ENCODE measurements at regions of chrX and their contacts with region 1.

Region 1: DNA sequence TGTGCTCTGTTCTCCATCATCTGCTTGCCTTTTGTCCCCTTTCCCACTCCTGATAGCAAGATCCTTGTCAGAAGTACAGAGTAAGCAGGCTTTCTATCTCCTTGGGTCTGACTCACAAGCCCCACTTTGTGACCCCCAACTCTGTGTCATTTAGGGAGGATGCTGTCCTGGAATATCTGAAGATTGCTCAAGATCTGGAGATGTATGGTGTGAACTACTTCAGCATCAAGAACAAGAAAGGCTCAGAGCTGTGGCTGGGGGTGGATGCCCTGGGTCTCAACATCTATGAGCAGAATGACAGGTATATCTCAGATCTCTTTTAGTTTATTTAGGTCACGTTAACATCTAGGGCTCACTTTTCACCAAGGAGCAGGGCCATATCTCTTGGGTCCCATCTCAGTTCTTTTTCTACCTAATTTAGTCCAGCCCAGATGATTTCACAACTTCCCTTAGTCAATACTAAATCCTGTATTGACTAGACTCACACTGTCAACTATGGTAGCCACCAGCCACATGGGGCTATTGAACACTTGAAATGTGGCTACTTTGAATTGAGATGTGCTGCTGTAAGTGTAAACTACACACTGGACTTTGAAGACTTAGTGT is 64.3 kb downstream of the MSN start:
- DNase-seq: peak; percentile 46
- H3K4me3 Mint-ChIP-seq: no peak overlapping the region
- H3K27ac Mint-ChIP-seq: peak overlapping the region; percentile 88
- H3K4me1 Mint-ChIP-seq: peaks cover 67% of the 10 kb centered on the region
- H3K27me3 Mint-ChIP-seq: no peaks in the 10 kb centered on the region

Region 2: GRCh38 chrX:65516756-65517155 is 215.0 kb before region 1 on chrX:
- CTCF ChIA-PET with region 1: no interaction called
- POLR2A ChIA-PET with region 1: no interaction called
- intact Hi-C with region 1: no loop called
- DNase-seq: no peak
- H3K4me3 Mint-ChIP-seq: no peak overlapping the region
- H3K27ac Mint-ChIP-seq: no peak overlapping the region
- H3K4me1 Mint-ChIP-seq: no peaks in the 10 kb centered on the region
- H3K27me3 Mint-ChIP-seq: no peaks in the 10 kb centered on the region

Region 3: GRCh38 chrX:65602221-65602560 is 129.6 kb before region 1 on chrX:
- CTCF ChIA-PET with region 1: no interaction called
- POLR2A ChIA-PET with region 1: no interaction called
- intact Hi-C with region 1: no loop called
- DNase-seq: no peak
- H3K4me3 Mint-ChIP-seq: no peak overlapping the region
- H3K27ac Mint-ChIP-seq: peak overlapping the region; percentile 91
- H3K4me1 Mint-ChIP-seq: peaks cover 77% of the 10 kb centered on the region
- H3K27me3 Mint-ChIP-seq: no peaks in the 10 kb centered on the region

Region 4: GRCh38 chrX:65744965-65745364 is 13.2 kb after region 1 on chrX:
- CTCF ChIA-PET with region 1: no interaction called
- POLR2A ChIA-PET with region 1: no interaction called
- intact Hi-C with region 1: loop called (anchors 1 kb)
- DNase-seq: no peak
- H3K4me3 Mint-ChIP-seq: no peak overlapping the region
- H3K27ac Mint-ChIP-seq: no peak overlapping the region
- H3K4me1 Mint-ChIP-seq: peaks cover 64% of the 10 kb centered on the region
- H3K27me3 Mint-ChIP-seq: no peaks in the 10 kb centered on the region

Measured in activated CD4-positive, alpha-beta memory T cell treated with anti-CD3 and anti-CD28 coated beads for 36 hours (primary cell).